Activated CD8-positive, alpha-beta T cell treated with anti-CD3 and anti-CD28 coated beads for 36 hours (primary cell): ENCODE measurements at regions of chr12 and their contacts with region 1.

Region 1: GRCh38 chr12:131132118-131132892 is 178.6 kb downstream of the ADGRD1 start:
- DNase-seq: peak; percentile 85
- ATAC-seq: peak; percentile 87
- H3K4me3 Mint-ChIP-seq: no peak overlapping the region
- H3K27ac Mint-ChIP-seq: no peak overlapping the region
- H3K4me1 Mint-ChIP-seq: peaks cover 2% of the 10 kb centered on the region
- H3K27me3 Mint-ChIP-seq: no peaks in the 10 kb centered on the region
- CTCF ChIP-seq: peak; percentile 84

Region 2: GRCh38 chr12:130916251-130916911 is 215.9 kb before region 1 on chr12:
- CTCF ChIA-PET with region 1: interaction called, 17 read pairs
- POLR2A ChIA-PET with region 1: no interaction called
- intact Hi-C with region 1: loop called (anchors 10 kb)
- DNase-seq: peak; percentile 45
- ATAC-seq: peak; percentile 68
- H3K4me3 Mint-ChIP-seq: no peak overlapping the region
- H3K27ac Mint-ChIP-seq: no peak overlapping the region
- H3K4me1 Mint-ChIP-seq: no peaks in the 10 kb centered on the region
- H3K27me3 Mint-ChIP-seq: peaks cover 46% of the 10 kb centered on the region
- CTCF ChIP-seq: peak; percentile 69

Region 3: DNA sequence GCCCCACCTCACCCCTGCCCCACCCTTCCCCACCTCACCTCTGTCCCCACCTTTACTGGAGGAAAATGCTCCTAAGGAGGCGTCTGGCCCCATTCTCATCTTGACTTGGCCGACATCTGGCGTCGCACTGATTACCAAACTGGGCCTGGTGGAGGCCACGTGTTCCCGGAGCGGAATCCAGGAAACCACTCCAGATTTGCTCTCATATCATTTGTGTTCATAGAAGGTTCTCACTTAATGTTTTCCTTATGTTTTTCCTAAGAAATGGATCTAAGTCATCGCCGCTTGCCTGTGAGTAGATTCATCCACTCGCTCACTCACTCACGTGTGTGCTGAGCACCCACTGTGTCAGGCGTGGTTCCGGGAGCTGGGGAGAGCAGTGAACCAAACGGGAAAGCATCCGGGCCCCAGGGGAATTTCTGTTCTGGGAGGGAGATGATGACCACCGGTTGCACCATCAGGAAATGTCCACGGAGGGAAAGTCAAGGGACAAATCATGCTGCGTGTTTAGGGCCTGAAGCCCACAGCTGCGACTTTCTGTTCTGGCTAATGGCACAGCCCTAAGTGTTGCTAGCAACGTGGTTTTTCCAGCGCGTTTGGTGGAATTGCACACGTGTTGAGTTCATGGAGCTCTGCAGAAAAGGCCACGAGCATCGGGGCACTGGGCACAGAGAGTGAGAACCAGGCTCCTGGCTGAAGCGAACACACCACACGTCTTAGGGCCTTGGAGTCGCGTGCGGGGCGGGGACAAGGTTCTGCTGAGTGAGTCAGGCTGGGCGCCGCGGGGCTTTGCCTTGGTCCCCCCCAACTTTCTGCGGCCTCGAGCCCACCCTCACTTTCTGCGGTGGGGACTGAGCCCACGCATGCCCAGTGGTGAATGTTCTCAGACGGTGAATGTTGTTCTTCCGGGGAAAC is 120.9 kb before region 1 on chr12:
- CTCF ChIA-PET with region 1: no interaction called
- POLR2A ChIA-PET with region 1: no interaction called
- intact Hi-C with region 1: no loop called
- DNase-seq: no peak
- ATAC-seq: no peak
- H3K4me3 Mint-ChIP-seq: no peak overlapping the region
- H3K27ac Mint-ChIP-seq: no peak overlapping the region
- H3K4me1 Mint-ChIP-seq: no peaks in the 10 kb centered on the region
- H3K27me3 Mint-ChIP-seq: no peaks in the 10 kb centered on the region
- CTCF ChIP-seq: no peak

Region 4: DNA sequence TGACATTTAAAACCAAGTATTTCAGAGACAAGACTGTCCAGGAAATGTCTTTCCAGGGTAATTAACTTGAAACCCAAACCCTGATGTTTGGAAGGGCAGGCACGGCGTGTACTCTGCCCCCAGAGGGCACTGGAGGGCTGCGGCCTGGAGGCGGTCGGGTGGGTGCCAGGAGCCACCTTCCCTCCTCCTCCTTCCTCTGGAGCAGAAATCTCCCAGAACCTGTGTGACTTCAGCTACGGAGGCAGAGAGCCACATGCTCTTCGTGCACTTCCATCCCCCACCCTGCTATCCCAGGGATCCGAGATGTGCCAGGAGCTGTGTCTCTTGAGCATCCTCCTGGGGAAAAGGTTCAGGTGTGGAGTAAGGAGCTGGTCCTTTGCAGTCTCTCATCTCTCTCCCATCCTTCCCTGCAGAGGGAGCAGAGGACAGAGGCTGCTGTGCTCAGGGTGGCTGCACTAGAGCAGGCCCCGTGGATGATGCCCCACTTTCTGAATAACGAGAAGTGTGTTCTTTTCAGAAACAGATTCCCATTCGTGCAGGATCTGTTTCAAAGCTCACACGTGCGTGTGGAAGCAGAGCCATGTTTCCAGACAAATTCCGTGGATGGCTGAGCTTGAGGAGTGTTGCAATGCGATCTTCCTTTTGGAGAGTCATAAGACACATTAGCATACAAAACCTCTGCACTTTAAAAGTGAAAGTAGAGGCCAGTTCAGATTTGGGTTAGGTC is 15.8 kb before region 1 on chr12:
- CTCF ChIA-PET with region 1: interaction called, 49 read pairs
- POLR2A ChIA-PET with region 1: interaction called, 3 read pairs
- intact Hi-C with region 1: no loop called
- DNase-seq: no peak
- ATAC-seq: no peak
- H3K4me3 Mint-ChIP-seq: no peak overlapping the region
- H3K27ac Mint-ChIP-seq: no peak overlapping the region
- H3K4me1 Mint-ChIP-seq: peaks cover 3% of the 10 kb centered on the region
- H3K27me3 Mint-ChIP-seq: no peaks in the 10 kb centered on the region
- CTCF ChIP-seq: peak; percentile 31